CD4-positive, alpha-beta memory T cell (primary cell): ENCODE measurements at regions of chr1 and their contacts with region 1.

Region 1: DNA sequence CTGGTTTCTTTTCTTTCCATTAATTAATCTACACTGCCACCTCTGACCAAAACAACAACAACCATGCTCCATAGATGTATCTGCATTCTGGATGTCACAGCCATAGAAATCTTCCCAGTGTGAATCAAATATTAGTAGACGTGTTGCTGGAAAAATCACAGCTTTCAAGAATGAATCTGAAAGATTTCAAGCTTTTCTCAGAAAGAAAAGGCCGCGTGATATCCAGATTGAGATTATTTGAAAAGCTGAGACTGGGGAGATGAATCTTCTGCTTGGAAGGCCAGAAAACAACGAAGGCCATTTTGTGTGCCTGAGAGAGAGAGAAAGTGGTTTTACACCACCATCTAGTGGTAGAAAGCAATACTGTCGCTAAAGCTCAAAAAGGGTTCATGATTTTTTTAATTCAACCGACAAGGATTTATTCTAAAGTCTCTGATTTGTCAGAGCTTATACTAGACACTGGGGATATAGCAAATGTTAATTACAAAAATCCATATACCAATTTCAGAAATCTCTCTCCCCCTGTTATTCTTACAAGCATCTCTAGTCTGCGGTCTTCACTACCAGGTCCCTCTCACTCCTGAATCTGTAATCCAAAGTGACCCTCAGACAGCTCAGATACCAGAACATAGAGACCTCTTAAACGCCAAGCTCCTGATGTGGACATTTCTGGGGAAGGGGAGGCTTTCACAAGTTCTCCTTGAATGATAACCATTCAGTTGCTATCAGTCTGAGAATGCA is 87.5 kb upstream of the SGIP1 start:
- DNase-seq: peak; percentile 57 to 76 (median 75)
- H3K4me3 ChIP-seq: peak overlapping the region in 1 of 2 donors; percentile 21
- H3K4me3 Mint-ChIP-seq: peak overlapping the region in 7 of 8 donors; percentile 36 to 84 (median 68)
- H3K27ac ChIP-seq: peak overlapping the region; percentile 48
- H3K27ac Mint-ChIP-seq: peak overlapping the region; percentile 73 to 95 (median 90)
- H3K4me1 ChIP-seq: peaks cover 23% of the 10 kb centered on the region
- H3K4me1 Mint-ChIP-seq: peaks cover 19 to 25% (median 21%) of the 10 kb centered on the region in 4 donors
- H3K27me3 ChIP-seq: no peaks in the 10 kb centered on the region
- H3K27me3 Mint-ChIP-seq: peaks cover 1 to 4% of the 10 kb centered on the region in 2 donors

Region 2: DNA sequence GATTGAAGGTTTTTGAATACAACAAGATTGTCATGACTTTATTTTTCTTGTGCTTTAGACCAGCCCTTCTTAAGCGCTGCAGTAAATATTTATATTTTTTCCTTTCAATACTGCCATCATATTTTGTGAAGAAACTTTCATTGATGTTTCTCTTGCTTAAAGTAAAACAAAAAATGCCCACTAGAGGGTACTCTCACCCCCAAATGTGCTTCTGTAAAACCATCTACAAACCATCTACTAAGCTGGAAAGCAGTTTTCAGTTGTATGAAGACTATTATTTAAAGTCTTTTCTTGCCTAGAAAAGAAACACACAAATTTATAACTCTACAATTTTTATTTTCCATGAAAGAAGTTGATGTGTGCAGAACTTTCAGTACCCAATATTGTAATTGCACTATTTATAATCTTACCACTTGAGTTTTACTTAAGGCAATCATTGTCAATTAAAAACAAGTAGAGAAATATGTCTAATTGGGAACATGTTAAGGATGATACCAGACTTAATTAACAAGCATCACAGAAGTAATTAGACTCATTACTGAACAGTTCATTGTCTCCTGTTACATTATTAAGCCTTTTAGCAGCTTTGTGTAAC is 1015.2 kb before region 1 on chr1:
- CTCF ChIA-PET with region 1: interaction called, 6 read pairs
- POLR2A ChIA-PET with region 1: no interaction called
- intact Hi-C with region 1: loop called (anchors 5 kb)
- DNase-seq: peak in 4 of 5 donors; percentile 13 to 37 (median 20)
- H3K4me3 ChIP-seq: no peak overlapping the region
- H3K4me3 Mint-ChIP-seq: no peak overlapping the region
- H3K27ac ChIP-seq: no peak overlapping the region
- H3K27ac Mint-ChIP-seq: peak overlapping the region in 1 of 7 donors; percentile 47
- H3K4me1 ChIP-seq: peaks cover 3% of the 10 kb centered on the region
- H3K4me1 Mint-ChIP-seq: peaks cover 2 to 13% (median 7%) of the 10 kb centered on the region in 4 donors
- H3K27me3 ChIP-seq: no peaks in the 10 kb centered on the region
- H3K27me3 Mint-ChIP-seq: no peaks in the 10 kb centered on the region

Region 3: DNA sequence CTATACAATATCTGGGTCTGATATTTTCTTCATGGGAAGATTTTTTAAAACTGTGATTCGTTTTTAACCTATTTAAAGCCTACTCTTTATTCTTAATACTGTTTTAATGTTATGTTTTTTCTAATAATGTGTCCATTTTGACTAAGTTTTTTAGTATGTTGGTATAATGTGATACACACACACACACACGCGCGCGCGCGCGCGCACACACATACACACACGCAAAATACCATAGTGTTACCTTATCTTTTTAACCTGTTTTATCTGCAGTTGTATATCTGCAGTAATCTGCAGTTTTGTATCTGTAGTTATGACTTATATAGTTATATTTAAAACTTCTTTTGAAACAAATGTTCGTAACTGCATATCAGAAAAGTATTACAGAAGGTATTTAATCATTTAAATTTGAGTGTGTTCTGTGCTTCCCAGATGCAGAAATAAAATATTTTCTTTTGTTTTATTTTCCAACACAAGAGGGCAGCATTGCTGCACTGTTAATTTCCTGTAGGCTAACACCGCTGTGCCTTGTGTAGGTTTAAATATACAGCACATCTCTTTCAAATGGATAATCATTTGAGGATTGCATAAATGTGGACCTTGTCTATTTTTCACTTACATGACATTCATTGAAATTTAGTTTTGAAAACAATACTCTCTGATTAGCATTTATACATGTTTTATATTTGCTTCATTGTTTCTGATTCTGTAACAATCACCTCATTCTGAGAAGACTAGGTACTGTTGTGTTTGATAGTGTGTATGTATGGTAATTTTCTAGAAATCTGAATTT is 487.7 kb before region 1 on chr1:
- CTCF ChIA-PET with region 1: interaction called, 109 read pairs
- POLR2A ChIA-PET with region 1: interaction called, 5 read pairs
- intact Hi-C with region 1: loop called (anchors 1 kb)
- DNase-seq: peak in 4 of 5 donors; percentile 55 to 73 (median 63)
- H3K4me3 ChIP-seq: no peak overlapping the region
- H3K4me3 Mint-ChIP-seq: no peak overlapping the region
- H3K27ac ChIP-seq: no peak overlapping the region
- H3K27ac Mint-ChIP-seq: no peak overlapping the region
- H3K4me1 ChIP-seq: no peaks in the 10 kb centered on the region
- H3K4me1 Mint-ChIP-seq: no peaks in the 10 kb centered on the region
- H3K27me3 ChIP-seq: no peaks in the 10 kb centered on the region
- H3K27me3 Mint-ChIP-seq: peaks cover 2 to 5% of the 10 kb centered on the region in 2 donors

Region 4: GRCh38 chr1:66197785-66198184 is 248.6 kb before region 1 on chr1:
- CTCF ChIA-PET with region 1: no interaction called
- POLR2A ChIA-PET with region 1: no interaction called
- intact Hi-C with region 1: no loop called
- DNase-seq: no peak
- H3K4me3 ChIP-seq: no peak overlapping the region
- H3K4me3 Mint-ChIP-seq: no peak overlapping the region
- H3K27ac ChIP-seq: no peak overlapping the region
- H3K27ac Mint-ChIP-seq: no peak overlapping the region
- H3K4me1 ChIP-seq: no peaks in the 10 kb centered on the region
- H3K4me1 Mint-ChIP-seq: no peaks in the 10 kb centered on the region
- H3K27me3 ChIP-seq: no peaks in the 10 kb centered on the region
- H3K27me3 Mint-ChIP-seq: peaks cover 1 to 6% of the 10 kb centered on the region in 2 donors

Region 5: DNA sequence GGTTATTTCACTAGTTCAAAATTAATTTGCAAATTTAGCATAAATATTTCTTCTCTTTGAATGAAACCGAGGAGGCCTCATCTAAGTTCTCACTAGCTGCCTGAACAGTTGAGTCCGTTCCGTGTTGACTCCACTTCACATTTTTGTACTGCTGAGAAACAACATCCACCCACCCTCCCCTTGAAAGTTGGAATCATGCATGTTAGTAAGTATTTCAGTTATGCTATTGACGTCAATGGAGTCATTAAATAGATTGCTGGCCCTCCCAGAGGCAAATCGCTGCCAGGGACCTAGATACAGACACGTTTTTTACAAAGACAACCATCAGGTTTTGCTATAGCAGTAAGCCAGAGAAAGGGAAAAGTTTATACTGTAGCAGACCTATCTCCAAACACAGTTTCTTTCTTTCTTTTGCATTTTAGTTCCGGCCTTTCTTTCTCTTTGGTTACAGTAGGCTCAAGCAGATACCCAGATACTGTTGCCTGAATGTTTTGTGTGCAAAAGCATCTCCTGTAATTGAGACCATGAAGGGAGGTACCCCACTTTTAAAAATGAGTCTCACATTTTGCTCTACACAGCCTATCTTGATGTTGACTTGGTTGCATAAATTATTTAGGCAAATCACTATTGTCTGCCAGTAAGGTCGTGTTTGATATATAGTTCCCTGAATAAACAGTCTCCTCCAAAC is 175.1 kb before region 1 on chr1:
- CTCF ChIA-PET with region 1: interaction called, 874 read pairs
- POLR2A ChIA-PET with region 1: interaction called, 23 read pairs
- intact Hi-C with region 1: no loop called
- DNase-seq: peak; percentile 43 to 69 (median 54)
- H3K4me3 ChIP-seq: no peak overlapping the region
- H3K4me3 Mint-ChIP-seq: peak overlapping the region; percentile 2 to 74 (median 48)
- H3K27ac ChIP-seq: peak overlapping the region; percentile 18
- H3K27ac Mint-ChIP-seq: peak overlapping the region; percentile 33 to 93 (median 89)
- H3K4me1 ChIP-seq: peaks cover 55% of the 10 kb centered on the region
- H3K4me1 Mint-ChIP-seq: peaks cover 43 to 54% (median 51%) of the 10 kb centered on the region in 4 donors
- H3K27me3 ChIP-seq: no peaks in the 10 kb centered on the region
- H3K27me3 Mint-ChIP-seq: no peaks in the 10 kb centered on the region

Region 6: DNA sequence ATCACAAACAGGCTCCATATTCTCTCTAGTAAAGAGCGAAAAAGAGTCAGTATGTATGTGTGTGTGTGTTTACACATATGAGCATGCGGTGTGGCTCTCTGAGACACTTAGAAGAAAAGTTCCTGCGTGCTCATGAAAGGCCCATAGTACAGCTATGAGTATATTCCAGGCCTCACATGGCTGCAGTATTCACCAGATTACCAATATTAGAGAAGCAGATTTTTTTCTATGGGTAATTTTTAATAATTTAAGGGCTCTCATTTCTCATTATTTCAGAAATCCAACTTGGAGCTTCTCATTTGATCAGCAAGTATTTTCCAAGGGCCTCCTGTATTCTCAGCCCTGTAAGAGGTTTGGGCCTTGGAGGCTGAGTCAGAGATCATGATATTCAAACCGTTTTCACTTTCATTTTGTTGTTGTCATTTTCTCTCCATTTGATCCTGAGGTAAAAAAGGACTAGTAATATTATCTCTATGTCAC is 145.4 kb before region 1 on chr1:
- CTCF ChIA-PET with region 1: interaction called, 10 read pairs
- POLR2A ChIA-PET with region 1: no interaction called
- intact Hi-C with region 1: no loop called
- DNase-seq: peak; percentile 56 to 68 (median 58)
- H3K4me3 ChIP-seq: no peak overlapping the region
- H3K4me3 Mint-ChIP-seq: peak overlapping the region; percentile 80 to 90 (median 84)
- H3K27ac ChIP-seq: peak overlapping the region; percentile 52
- H3K27ac Mint-ChIP-seq: peak overlapping the region; percentile 83 to 98 (median 96)
- H3K4me1 ChIP-seq: peaks cover 32% of the 10 kb centered on the region
- H3K4me1 Mint-ChIP-seq: peaks cover 23 to 41% (median 30%) of the 10 kb centered on the region in 4 donors
- H3K27me3 ChIP-seq: no peaks in the 10 kb centered on the region
- H3K27me3 Mint-ChIP-seq: no peaks in the 10 kb centered on the region

Region 7: GRCh38 chr1:66350001-66350547 is 96.4 kb before region 1 on chr1:
- CTCF ChIA-PET with region 1: interaction called, 29 read pairs
- POLR2A ChIA-PET with region 1: interaction called, 5 read pairs
- intact Hi-C with region 1: loop called (anchors 5 kb)
- DNase-seq: peak; percentile 73 to 82 (median 77)
- H3K4me3 ChIP-seq: peak overlapping the region in 1 of 2 donors; percentile 11
- H3K4me3 Mint-ChIP-seq: peak overlapping the region; percentile 73 to 83 (median 80)
- H3K27ac ChIP-seq: peak overlapping the region; percentile 70
- H3K27ac Mint-ChIP-seq: peak overlapping the region; percentile 89 to 100 (median 97)
- H3K4me1 ChIP-seq: peaks cover 98% of the 10 kb centered on the region
- H3K4me1 Mint-ChIP-seq: peaks cover 82 to 97% (median 89%) of the 10 kb centered on the region in 4 donors
- H3K27me3 ChIP-seq: no peaks in the 10 kb centered on the region
- H3K27me3 Mint-ChIP-seq: no peaks in the 10 kb centered on the region

Region 8: DNA sequence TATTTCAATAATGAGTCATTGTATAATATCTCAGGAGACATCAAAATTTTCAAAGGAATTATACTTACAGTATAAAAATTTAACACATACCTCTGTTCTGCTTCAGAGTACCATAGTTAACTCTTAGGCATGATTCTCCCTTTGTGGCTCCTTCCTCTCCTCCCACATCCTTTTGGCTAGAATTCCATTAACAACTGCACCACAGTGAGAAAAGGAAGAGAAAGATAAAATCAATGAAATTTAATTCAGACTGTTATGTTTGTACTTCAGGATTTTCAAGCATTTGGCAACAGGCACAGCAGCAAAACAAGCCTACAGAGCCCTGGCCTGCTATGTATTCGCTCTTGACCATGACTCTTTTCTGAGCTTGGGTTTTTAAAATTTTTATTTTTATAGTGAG is 30.3 kb after region 1 on chr1:
- CTCF ChIA-PET with region 1: no interaction called
- POLR2A ChIA-PET with region 1: no interaction called
- intact Hi-C with region 1: no loop called
- DNase-seq: no peak
- H3K4me3 ChIP-seq: no peak overlapping the region
- H3K4me3 Mint-ChIP-seq: no peak overlapping the region
- H3K27ac ChIP-seq: no peak overlapping the region
- H3K27ac Mint-ChIP-seq: no peak overlapping the region
- H3K4me1 ChIP-seq: no peaks in the 10 kb centered on the region
- H3K4me1 Mint-ChIP-seq: no peaks in the 10 kb centered on the region
- H3K27me3 ChIP-seq: no peaks in the 10 kb centered on the region
- H3K27me3 Mint-ChIP-seq: peaks cover 26 to 31% of the 10 kb centered on the region in 2 donors

Region 9: GRCh38 chr1:66633159-66633558 is 186.7 kb after region 1 on chr1:
- CTCF ChIA-PET with region 1: no interaction called
- POLR2A ChIA-PET with region 1: no interaction called
- intact Hi-C with region 1: no loop called
- DNase-seq: no peak
- H3K4me3 ChIP-seq: no peak overlapping the region
- H3K4me3 Mint-ChIP-seq: no peak overlapping the region
- H3K27ac ChIP-seq: no peak overlapping the region
- H3K27ac Mint-ChIP-seq: no peak overlapping the region
- H3K4me1 ChIP-seq: no peaks in the 10 kb centered on the region
- H3K4me1 Mint-ChIP-seq: no peaks in the 10 kb centered on the region
- H3K27me3 ChIP-seq: no peaks in the 10 kb centered on the region
- H3K27me3 Mint-ChIP-seq: peaks cover 5 to 10% of the 10 kb centered on the region in 2 donors